ENCODE measurements at regions of chr14 and their contacts with region 1.

Region 1: GRCh38 chr14:60266021-60266937 is 17.3 kb downstream of the PPM1A start:
- DNase-seq: no peak
- H3K4me3 ChIP-seq: no peak overlapping the region
- CTCF ChIP-seq: no peak

Region 2: DNA sequence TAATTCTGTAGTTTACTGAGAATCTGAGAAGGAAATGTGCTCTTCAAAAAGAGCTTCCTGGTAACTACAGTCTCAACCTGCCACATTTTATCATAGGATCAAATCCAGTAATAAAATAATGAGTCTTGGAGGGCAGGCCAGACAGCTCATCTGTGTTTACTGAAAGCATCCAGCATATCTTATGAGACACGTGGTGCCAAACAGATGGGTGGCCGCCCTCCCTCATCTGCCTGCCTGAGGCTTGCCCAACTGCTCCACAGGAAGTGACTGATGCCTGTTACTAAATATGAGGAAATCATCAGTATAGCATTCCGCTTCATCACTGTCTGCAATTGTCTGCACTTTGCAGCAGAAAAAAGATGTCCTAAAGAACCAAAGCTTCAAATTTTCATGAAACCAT is 114.6 kb before region 1 on chr14:
- CTCF ChIA-PET with region 1: no interaction called
- POLR2A ChIA-PET with region 1: no interaction called
- DNase-seq: peak; percentile 86
- H3K4me3 ChIP-seq: no peak overlapping the region
- CTCF ChIP-seq: no peak

Region 3: GRCh38 chr14:60249321-60250256 is 16.7 kb before region 1 on chr14:
- CTCF ChIA-PET with region 1: interaction called, 13 read pairs
- POLR2A ChIA-PET with region 1: no interaction called
- DNase-seq: no peak
- H3K4me3 ChIP-seq: peak overlapping the region; percentile 69
- CTCF ChIP-seq: no peak

Region 4: DNA sequence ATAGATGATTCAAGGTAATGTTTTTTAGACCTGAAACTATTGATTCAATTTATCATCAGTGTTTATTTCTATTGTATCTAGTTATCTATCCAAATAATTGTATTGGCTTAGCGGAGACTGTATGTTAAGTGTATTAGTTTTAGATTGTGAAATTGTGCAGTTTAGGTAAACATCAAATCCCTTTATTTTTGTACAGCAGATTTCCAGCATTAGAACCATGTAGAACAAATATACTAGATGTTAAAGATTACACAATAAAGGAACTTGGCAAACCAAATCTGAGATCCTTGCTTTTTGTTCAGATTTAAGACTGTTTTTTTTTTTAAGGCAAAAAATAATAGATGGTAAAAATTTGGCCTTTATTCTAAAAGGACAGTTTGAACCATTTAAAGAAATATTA is 22.0 kb after region 1 on chr14:
- CTCF ChIA-PET with region 1: no interaction called
- POLR2A ChIA-PET with region 1: no interaction called
- DNase-seq: no peak
- H3K4me3 ChIP-seq: no peak overlapping the region
- CTCF ChIP-seq: no peak

Region 5: DNA sequence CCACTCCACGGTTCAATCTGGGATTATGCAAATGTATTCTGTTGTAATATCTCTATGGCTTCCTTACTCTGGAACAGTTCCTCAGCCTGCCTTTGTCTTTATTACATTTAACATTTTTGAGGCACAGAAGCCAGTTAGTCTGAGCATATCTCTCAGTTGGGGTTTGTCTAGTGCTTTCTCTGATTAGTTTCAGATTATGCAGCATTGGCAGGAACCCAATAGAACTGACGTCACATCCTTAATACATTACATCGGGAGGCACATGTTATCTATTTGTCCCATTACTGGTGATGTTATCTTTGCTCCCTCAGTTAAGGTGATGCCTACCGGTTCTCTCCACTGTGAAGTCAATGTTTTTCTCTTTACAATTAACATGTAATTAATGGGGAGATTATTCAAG is 45.1 kb after region 1 on chr14:
- CTCF ChIA-PET with region 1: no interaction called
- POLR2A ChIA-PET with region 1: no interaction called
- DNase-seq: no peak
- H3K4me3 ChIP-seq: no peak overlapping the region
- CTCF ChIP-seq: no peak

Region 6: DNA sequence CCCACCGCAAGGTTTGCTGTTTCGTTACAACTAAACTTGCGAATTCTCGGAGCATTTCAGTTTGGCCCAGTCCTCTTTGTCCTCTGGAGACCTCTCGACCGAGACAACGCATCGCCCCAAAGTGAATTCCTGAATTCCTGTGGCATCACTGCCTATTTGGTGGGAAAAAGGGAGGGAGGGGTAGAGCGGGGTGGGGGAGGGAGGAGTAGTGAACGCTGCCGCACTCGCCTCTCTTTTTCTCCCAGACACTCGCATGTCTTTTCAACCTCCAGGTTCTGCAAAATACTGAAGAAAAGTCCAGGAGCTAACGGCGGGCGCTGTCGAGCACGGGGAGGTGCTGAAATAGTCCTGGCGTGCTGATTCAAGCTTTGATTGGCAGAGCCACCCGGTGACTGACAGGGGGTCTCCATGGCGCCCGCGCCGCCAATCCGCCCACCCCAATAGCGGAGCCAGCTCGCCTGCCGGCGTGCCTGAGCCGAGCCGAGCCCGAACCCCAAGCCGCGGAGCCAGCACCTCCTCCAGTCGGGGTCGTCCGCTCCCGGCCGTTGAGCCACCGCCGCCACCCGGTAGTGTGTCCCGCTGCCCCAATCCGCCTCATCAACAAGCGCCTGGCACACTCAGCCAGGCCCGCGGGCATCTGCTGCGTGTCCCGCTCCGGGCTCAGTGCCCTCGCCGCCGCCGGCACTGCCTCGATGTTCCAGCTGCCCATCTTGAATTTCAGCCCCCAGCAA is 242.6 kb after region 1 on chr14 and contains the start of gene SIX6:
- CTCF ChIA-PET with region 1: no interaction called
- POLR2A ChIA-PET with region 1: no interaction called
- DNase-seq: no peak
- H3K4me3 ChIP-seq: no peak within 1 kb of the TSS
- CTCF ChIP-seq: no peak

Measured in AG04449 (cell line).